ENCODE measurements at regions of chr5 and their contacts with region 1.

Region 1: DNA sequence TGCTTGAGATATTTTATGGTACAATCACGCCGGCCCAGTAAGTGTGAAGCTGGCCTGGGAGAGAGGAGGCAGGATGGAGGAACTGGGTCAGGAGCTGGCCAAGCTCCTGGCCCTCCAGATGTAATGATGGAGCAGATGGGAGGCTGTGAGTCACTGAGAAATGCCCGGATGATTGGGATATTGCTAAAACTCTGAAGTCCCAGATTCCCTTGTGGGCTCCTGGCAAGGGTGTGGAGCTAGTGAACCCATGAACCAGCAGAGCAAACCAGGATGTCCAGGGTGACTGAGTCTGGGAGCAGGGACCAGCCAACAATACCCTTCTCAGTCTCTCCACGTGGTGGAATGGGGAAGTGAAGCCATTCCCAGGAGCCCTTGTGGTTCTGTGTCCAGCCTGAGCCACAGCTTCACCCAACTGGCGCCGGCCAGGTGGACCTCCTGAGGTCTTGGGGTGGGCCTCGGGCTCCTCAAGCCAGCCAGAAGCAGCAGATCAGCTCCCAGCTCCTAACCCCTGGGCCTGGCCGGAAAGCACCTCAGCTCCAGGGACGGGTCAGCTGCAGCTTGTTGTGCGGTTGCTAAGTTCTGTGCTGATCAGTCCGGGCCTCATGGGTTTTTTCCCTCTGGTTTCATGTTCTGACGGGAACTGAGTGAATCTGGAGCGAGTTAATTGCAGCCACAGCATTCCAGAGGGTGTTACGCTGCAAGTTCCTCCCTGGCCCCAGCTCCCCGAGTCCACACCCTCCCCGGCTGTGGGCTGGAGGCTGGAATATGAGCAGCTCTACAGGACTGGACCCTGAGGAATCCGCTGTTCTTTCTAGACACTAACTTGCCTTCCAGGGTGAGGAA is 37.6 kb downstream of the DUSP1 start:
- DNase-seq: peak; percentile 76
- H3K4me3 ChIP-seq: no peak overlapping the region
- H3K27ac ChIP-seq: peak overlapping the region; percentile 77 to 80
- H3K4me1 ChIP-seq: peaks cover 8% of the 10 kb centered on the region
- H3K27me3 ChIP-seq: no peaks in the 10 kb centered on the region
- CTCF ChIP-seq: peak in 1 of 4 experiments; percentile 19
- POLR2A ChIP-seq: no peak

Region 2: GRCh38 chr5:172583931-172584511 is 149.3 kb before region 1 on chr5:
- intact Hi-C with region 1: no loop called
- DNase-seq: no peak
- H3K4me3 ChIP-seq: no peak overlapping the region
- H3K27ac ChIP-seq: peak overlapping the region; percentile 60 to 66
- H3K4me1 ChIP-seq: no peaks in the 10 kb centered on the region
- H3K27me3 ChIP-seq: no peaks in the 10 kb centered on the region
- CTCF ChIP-seq: no peak
- POLR2A ChIP-seq: no peak

Region 3: GRCh38 chr5:172659909-172660628 is 73.3 kb before region 1 on chr5:
- intact Hi-C with region 1: no loop called
- DNase-seq: peak; percentile 84
- H3K4me3 ChIP-seq: no peak overlapping the region
- H3K27ac ChIP-seq: peak overlapping the region; percentile 79 to 82
- H3K4me1 ChIP-seq: peaks cover 12% of the 10 kb centered on the region
- H3K27me3 ChIP-seq: no peaks in the 10 kb centered on the region
- CTCF ChIP-seq: no peak
- POLR2A ChIP-seq: no peak

Region 4: DNA sequence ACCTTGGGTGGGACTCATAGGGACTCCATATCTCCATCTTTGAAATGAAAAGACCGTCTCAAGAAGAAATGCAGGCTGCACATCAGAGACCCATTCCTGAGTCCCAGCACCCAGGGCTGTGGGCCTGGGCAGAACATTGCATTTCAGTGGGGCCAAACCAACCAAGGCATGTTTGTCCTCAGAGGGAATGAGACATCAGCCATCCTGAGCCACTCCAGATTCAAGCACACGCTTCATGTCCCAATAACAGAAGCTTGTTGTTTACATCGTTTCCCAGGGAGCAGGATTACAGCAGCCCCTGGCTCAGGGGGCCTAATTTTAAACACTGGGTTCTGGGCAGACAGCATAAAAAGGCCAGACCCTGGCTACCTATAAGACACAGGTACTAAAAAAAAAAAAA is 13.4 kb after region 1 on chr5:
- intact Hi-C with region 1: loop called (anchors 1 kb)
- DNase-seq: no peak
- H3K4me3 ChIP-seq: no peak overlapping the region
- H3K27ac ChIP-seq: no peak overlapping the region
- H3K4me1 ChIP-seq: no peaks in the 10 kb centered on the region
- H3K27me3 ChIP-seq: no peaks in the 10 kb centered on the region
- CTCF ChIP-seq: no peak
- POLR2A ChIP-seq: no peak

Region 5: DNA sequence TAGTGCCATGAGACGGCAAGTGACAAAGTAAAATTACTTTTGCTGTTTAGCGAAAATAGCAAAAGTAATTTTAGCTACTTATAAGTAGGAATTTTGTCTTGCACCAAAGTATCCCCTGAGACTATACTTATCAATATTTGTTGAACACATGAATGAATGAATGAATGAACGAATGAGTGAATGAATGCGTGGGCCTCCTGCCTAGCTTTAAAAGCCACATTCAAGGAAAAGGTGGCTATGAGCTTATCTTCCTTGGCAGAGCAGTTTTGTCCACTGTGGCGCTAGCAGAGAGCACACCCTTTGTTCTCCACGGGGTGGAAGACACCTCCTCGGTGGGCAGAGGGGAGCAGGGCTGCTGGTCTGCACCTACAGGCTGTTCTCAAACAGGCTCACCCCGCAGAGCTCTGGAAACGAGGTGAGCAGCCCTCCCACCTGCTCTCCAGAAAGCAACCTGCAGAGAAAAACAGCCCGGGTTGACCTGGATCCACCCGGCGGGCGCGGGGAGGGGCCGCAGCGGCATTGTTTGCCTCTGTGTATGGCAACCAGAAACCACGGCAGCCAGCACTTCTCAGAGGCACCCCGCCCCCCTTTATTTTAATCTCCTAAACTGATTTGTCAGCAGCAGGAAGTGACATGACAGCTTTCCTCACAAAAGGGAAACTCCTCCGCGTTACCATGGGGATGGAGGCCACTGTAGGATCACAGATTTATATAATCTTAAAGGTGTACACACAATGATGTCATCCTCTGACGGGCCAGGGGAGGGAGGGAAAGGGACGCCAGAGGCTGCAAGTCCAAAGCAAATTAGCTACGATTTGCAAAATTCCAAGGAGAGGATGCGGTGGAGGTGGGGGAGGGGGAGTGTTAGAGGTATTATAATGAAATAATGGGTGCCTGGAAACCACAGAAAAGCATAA is 31.8 kb after region 1 on chr5:
- intact Hi-C with region 1: loop called (anchors 5 kb)
- DNase-seq: peak; percentile 98
- H3K4me3 ChIP-seq: peak overlapping the region; percentile 12 to 92
- H3K27ac ChIP-seq: peak overlapping the region; percentile 98 to 100
- H3K4me1 ChIP-seq: no peaks in the 10 kb centered on the region
- H3K27me3 ChIP-seq: no peaks in the 10 kb centered on the region
- CTCF ChIP-seq: peak in 2 of 4 experiments; percentile 18 to 22
- POLR2A ChIP-seq: peak; percentile 54

Region 6: DNA sequence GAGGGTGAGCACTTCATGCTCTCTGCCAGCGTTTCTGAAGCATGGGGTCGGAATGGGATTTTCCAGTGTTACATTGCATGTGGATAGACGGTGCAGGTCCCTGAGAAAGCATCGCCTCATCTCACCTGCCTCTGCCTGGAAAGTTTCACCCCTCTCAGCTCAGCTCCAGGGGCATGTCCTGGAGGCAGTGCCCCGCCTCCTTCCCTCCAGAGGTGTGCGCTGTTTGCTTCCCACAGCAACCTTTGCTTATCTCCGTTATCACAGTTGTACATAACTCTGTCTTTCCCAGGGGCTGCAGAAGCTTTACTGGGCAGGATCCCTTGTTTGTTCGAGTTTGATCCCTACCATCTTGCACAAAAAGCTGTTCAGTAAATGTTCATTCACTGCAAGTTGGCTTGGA is 312.1 kb after region 1 on chr5:
- intact Hi-C with region 1: no loop called
- DNase-seq: no peak
- H3K4me3 ChIP-seq: no peak overlapping the region
- H3K27ac ChIP-seq: no peak overlapping the region
- H3K4me1 ChIP-seq: no peaks in the 10 kb centered on the region
- H3K27me3 ChIP-seq: no peaks in the 10 kb centered on the region
- CTCF ChIP-seq: no peak
- POLR2A ChIP-seq: no peak

Region 7: GRCh38 chr5:173671121-173671949 is 938.0 kb after region 1 on chr5:
- intact Hi-C with region 1: no loop called
- DNase-seq: peak; percentile 75
- H3K4me3 ChIP-seq: no peak overlapping the region
- H3K27ac ChIP-seq: peak overlapping the region; percentile 41 to 52
- H3K4me1 ChIP-seq: no peaks in the 10 kb centered on the region
- H3K27me3 ChIP-seq: no peaks in the 10 kb centered on the region
- CTCF ChIP-seq: no peak
- POLR2A ChIP-seq: no peak

Measured in prostate gland (tissue), 2 donors.